Activated naive CD4-positive, alpha-beta T cell treated with anti-CD3 and anti-CD28 coated beads for 36 hours (primary cell): ENCODE measurements at regions of chr15 and their contacts with region 1.

Region 1: DNA sequence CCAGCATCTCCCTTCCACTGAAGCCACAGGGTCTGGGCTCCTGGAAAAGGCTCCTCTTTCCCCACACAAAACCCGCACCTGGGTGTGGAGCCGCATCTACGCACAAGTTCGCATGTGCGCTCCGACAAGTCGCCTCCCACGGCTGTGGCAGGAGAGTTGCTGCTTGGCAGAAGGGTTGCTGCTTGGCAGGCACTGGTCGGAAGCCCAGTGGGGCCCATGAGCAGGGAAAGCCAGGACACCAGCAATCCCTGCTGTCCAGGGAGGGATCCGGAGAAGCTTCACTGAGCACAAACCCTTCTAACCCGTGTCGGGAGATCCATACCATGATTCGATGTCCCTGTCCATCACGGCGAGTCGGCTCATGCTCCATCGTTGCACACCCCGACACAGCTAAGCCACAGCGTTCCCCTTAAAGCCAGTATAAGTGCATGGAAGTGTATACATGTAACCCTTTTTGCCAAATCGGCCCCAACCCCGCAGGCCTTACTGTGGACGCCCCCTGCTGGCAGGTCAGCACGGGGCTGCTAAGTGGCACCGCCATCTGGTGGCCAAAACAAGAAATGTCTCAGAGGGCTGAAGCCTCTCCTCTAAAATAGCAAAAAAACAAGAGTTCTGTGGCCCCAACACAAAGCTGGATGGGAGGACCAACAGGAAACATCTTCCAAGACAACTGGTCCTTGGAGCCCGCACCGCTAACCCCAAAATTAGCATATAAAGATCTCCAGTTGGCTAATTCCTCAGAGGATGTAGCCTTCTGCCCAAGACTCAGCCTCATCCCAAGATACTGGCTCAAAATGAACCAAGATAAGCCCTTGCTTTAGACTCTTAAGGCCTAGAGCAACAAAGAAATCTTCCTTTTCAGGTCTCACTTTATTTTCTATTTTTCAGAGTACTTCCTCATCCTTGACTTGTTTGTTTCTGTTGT is 8.3 kb downstream of the ANKRD63 start:
- DNase-seq: peak; percentile 92
- H3K4me3 Mint-ChIP-seq: no peak overlapping the region
- H3K27ac Mint-ChIP-seq: no peak overlapping the region
- H3K4me1 Mint-ChIP-seq: peaks cover 2% of the 10 kb centered on the region
- H3K27me3 Mint-ChIP-seq: peaks cover 23% of the 10 kb centered on the region

Region 2: GRCh38 chr15:39686000-39686613 is 588.5 kb before region 1 on chr15:
- CTCF ChIA-PET with region 1: interaction called, 3 read pairs
- intact Hi-C with region 1: loop called (anchors 1 kb)
- DNase-seq: peak; percentile 54
- H3K4me3 Mint-ChIP-seq: no peak overlapping the region
- H3K27ac Mint-ChIP-seq: no peak overlapping the region
- H3K4me1 Mint-ChIP-seq: no peaks in the 10 kb centered on the region
- H3K27me3 Mint-ChIP-seq: no peaks in the 10 kb centered on the region

Region 3: DNA sequence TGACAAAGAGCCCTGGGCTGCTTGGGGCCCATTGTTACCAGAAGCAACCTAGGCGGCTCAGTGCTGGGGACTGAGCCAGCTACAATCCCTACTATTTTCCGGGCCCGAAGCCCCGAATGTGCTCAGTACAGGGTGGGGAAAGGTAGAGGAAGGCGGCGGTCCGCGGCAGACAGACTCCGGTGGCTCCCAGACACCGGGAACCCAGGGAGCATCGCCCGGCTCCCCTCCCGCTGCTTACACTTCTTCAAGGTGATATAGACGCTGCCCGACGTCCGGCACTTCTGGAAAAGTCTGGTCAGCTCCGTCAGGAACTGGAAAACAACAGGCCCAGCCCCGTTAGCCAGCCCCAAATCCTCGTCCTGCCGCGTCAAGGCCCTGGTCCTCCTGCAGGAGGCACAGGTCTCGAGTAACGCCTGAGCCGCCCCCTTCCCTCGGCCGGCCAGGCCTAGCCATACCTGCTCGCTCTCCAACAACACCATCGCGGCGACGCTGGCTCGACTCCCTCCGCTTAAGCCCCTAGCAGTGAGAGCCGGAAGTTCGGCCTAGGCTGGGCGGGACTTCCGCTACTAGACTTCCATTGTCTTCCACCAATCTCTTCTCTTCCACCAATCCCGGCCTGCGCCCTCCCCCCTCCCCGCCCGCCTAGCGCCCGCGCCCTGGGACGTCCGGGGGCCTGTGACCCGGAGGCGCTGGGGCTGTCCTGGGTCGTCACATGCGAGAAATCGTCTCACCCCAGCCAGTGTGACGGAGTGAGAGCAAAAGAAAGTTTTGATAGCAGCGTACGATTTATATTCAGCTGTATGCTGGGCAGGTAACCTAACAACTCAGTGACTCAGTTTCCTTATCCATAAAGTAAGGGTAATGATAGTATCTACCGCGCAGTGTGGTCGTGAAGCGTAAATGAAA is 235.7 kb before region 1 on chr15 and contains the start of gene SRP14:
- CTCF ChIA-PET with region 1: interaction called, 105 read pairs
- intact Hi-C with region 1: no loop called
- DNase-seq: peak; percentile 97
- H3K4me3 Mint-ChIP-seq: peak within 1 kb of the TSS; percentile 91
- H3K27ac Mint-ChIP-seq: peak within 1 kb of the TSS; percentile 92
- H3K4me1 Mint-ChIP-seq: peaks cover 37% of the 10 kb centered on the region
- H3K27me3 Mint-ChIP-seq: no peaks in the 10 kb centered on the region
- total RNA-seq, gene SRP14: 185 to 198 TPM

Region 4: GRCh38 chr15:40115670-40116093 is 158.9 kb before region 1 on chr15:
- CTCF ChIA-PET with region 1: interaction called, 15 read pairs
- intact Hi-C with region 1: no loop called
- DNase-seq: peak; percentile 78
- H3K4me3 Mint-ChIP-seq: no peak overlapping the region
- H3K27ac Mint-ChIP-seq: peak overlapping the region; percentile 11
- H3K4me1 Mint-ChIP-seq: peaks cover 11% of the 10 kb centered on the region
- H3K27me3 Mint-ChIP-seq: no peaks in the 10 kb centered on the region

Region 5: GRCh38 chr15:40244663-40245601 is 29.7 kb before region 1 on chr15:
- CTCF ChIA-PET with region 1: interaction called, 10 read pairs
- intact Hi-C with region 1: no loop called
- DNase-seq: no peak
- H3K4me3 Mint-ChIP-seq: no peak overlapping the region
- H3K27ac Mint-ChIP-seq: no peak overlapping the region
- H3K4me1 Mint-ChIP-seq: no peaks in the 10 kb centered on the region
- H3K27me3 Mint-ChIP-seq: no peaks in the 10 kb centered on the region

Region 6: GRCh38 chr15:40307421-40308211 is 33.0 kb after region 1 on chr15 and contains the start of gene PLCB2:
- CTCF ChIA-PET with region 1: interaction called, 365 read pairs
- intact Hi-C with region 1: loop called (anchors 1 kb)
- DNase-seq: peak; percentile 77
- H3K4me3 Mint-ChIP-seq: peak within 1 kb of the TSS; percentile 97
- H3K27ac Mint-ChIP-seq: peak within 1 kb of the TSS; percentile 96
- H3K4me1 Mint-ChIP-seq: peaks cover 29% of the 10 kb centered on the region
- H3K27me3 Mint-ChIP-seq: no peaks in the 10 kb centered on the region
- total RNA-seq, gene PLCB2: 55.0 to 56.7 TPM

Region 7: DNA sequence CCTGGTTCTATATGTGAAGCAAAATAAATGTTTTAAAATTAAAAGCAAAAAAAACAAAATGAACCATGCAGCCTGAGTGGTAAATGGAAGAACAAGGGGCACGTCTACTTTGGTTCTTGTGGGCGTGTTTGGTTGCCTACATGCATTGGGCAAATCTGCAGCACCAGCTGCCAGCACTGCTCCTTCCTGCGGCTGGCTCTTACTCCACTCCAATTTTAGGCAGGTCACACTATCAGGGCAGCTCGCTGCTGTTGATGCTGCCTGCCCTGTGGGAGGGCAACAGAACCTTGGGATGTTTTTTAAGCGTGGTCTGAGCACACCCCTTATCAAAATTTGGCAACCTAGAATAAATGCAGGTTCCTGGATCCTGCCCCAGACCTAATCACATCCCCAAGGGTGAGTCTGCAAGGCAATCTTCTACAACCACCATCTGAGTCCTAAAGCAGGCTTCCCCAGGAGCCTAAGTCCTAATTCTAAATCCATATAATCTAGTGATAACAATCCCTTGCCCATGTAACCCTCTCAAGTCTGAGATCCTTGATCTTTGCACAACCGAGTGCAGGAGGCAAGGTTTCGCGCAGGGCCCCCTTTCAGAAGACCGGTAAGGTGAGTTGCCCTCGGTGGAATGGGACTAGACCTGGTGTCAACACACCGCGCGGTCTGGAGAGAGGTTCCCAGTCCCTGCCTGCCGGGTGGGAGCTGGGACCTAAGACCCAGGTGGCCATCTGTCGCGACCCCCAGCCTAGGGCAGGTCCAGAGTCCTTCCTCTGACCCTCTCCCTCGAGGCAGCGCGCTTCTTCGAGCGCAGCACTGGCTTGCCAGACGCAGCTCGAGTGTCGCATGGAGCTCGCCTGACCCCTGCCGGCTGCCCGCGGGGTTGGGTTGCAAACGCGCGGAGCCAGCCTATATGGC is 146.9 kb after region 1 on chr15:
- CTCF ChIA-PET with region 1: interaction called, 5 read pairs
- intact Hi-C with region 1: loop called (anchors 1 kb)
- DNase-seq: peak; percentile 90
- H3K4me3 Mint-ChIP-seq: no peak overlapping the region
- H3K27ac Mint-ChIP-seq: no peak overlapping the region
- H3K4me1 Mint-ChIP-seq: no peaks in the 10 kb centered on the region
- H3K27me3 Mint-ChIP-seq: no peaks in the 10 kb centered on the region

Region 8: GRCh38 chr15:40650479-40650878 is 375.9 kb after region 1 on chr15:
- CTCF ChIA-PET with region 1: no interaction called
- intact Hi-C with region 1: no loop called
- DNase-seq: no peak
- H3K4me3 Mint-ChIP-seq: no peak overlapping the region
- H3K27ac Mint-ChIP-seq: no peak overlapping the region
- H3K4me1 Mint-ChIP-seq: no peaks in the 10 kb centered on the region
- H3K27me3 Mint-ChIP-seq: no peaks in the 10 kb centered on the region